CD4-positive, alpha-beta T cell (primary cell): ENCODE measurements at regions of chr12 and their contacts with region 1.

Region 1: DNA sequence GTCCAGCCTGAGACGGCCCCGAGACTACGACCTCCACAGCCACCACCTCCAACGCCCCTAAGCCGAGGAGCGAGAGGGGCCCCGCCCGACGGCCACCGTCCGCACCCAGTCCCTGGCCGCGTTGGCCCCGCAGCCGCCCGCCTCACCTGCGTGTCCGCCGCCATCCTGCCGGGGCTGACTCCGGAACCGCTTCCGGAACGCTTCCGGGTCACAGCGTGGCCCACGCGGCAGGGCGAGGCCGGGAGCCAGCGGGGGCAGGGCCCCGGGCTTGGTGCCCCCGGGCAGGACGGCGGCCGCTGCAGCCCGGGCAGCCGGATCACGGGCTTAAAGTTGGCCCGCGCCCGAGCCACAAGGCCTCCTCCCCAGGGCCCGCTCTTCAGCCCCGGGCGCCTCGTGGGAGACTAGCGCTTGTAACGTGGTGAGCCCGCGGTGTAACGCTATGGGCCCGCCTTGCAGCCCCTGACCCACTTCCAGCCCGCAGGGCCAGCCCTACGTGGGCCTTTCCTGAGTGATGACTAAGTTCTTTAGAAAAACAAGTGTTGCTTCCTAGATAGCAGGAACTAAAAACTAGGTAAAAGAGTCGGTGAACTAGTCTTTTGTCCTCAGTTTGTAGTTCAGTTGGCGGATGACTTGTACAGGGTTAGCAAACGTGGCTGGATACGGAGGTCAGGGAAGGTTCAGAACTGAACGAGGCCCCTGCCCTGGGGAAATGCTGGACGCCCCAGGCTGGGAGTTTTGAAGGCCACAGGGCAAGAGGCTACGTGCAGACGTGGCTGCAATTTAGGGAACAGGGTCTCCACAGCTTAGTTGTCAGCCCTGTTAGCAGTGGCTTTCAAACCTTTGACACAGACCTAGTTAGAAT is at the start of gene GCN1:
- DNase-seq: peak; percentile 75 to 92 (median 86)
- ATAC-seq: peak; percentile 88
- H3K4me3 ChIP-seq: peak within 1 kb of the TSS; percentile 64
- H3K4me3 Mint-ChIP-seq: peak within 1 kb of the TSS; percentile 95
- H3K27ac ChIP-seq: peak within 1 kb of the TSS; percentile 75 to 86
- H3K27ac Mint-ChIP-seq: peak within 1 kb of the TSS; percentile 98
- H3K4me1 ChIP-seq: peaks cover 49% of the 10 kb centered on the region
- H3K4me1 Mint-ChIP-seq: peaks cover 45% of the 10 kb centered on the region
- H3K27me3 ChIP-seq: no peaks in the 10 kb centered on the region
- H3K27me3 Mint-ChIP-seq: no peaks in the 10 kb centered on the region
- CTCF ChIP-seq: no peak
- total RNA-seq, gene GCN1: 121 to 128 TPM

Region 2: GRCh38 chr12:120012067-120012621 is 182.6 kb before region 1 on chr12:
- CTCF ChIA-PET with region 1: no interaction called
- POLR2A ChIA-PET with region 1: interaction called, 11 read pairs
- intact Hi-C with region 1: no loop called
- DNase-seq: peak; percentile 27 to 98 (median 62)
- ATAC-seq: peak; percentile 57
- H3K4me3 ChIP-seq: peak overlapping the region; percentile 21
- H3K4me3 Mint-ChIP-seq: peak overlapping the region; percentile 76
- H3K27ac ChIP-seq: peak overlapping the region; percentile 86 to 96
- H3K27ac Mint-ChIP-seq: peak overlapping the region; percentile 96
- H3K4me1 ChIP-seq: peaks cover 75% of the 10 kb centered on the region
- H3K4me1 Mint-ChIP-seq: peaks cover 81% of the 10 kb centered on the region
- H3K27me3 ChIP-seq: no peaks in the 10 kb centered on the region
- H3K27me3 Mint-ChIP-seq: no peaks in the 10 kb centered on the region
- CTCF ChIP-seq: no peak

Region 3: DNA sequence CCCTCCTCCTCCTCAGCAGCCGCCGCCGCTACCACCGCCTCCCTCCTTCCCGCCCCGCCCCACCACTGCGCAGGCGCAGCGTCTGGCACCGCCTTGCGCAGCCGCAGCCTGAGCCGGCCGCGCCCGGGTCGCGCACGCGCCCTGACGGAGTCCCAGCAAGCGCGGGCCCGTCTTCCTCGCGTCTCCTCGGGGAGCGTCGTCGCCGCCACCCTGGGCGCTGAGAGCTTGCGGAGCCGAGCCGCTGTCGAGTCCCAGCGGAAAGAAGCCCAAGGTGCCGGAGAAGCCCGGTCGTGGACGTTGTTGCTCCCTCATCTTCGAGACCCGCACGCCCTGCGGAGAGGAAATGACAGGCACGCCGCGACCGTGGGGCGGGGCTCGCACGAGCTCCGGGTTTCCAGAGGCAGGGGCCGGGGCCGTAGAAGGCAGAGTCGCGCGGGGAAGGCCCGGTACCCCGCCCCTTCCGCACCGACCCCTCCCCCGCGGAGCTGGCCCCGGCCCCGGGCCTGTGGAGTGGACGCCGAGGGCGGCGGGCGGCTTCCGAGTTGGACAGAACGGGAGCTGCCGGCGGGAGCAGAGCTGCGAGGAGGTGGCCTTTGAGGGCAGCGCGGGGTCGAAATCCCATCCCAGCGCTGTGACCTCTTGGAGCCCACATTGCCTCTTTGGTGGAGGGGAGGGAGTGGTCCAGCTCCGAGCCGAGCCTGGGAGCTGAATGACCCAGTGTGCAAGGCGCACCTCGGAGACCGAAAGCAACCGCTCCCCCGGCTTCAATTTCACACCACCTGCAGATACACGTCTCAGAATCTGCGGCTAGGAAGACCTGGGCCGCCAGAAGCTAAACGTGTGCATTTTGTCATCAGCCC is 77.7 kb before region 1 on chr12:
- CTCF ChIA-PET with region 1: no interaction called
- POLR2A ChIA-PET with region 1: no interaction called
- intact Hi-C with region 1: loop called in 1 of 2 experiments (anchors 5 kb)
- DNase-seq: peak; percentile 96 to 99 (median 98)
- ATAC-seq: peak; percentile 75
- H3K4me3 ChIP-seq: peak overlapping the region; percentile 86
- H3K4me3 Mint-ChIP-seq: peak overlapping the region; percentile 91
- H3K27ac ChIP-seq: peak overlapping the region; percentile 94 to 95
- H3K27ac Mint-ChIP-seq: peak overlapping the region; percentile 84
- H3K4me1 ChIP-seq: peaks cover 61% of the 10 kb centered on the region
- H3K4me1 Mint-ChIP-seq: peaks cover 76% of the 10 kb centered on the region
- H3K27me3 ChIP-seq: no peaks in the 10 kb centered on the region
- H3K27me3 Mint-ChIP-seq: no peaks in the 10 kb centered on the region
- CTCF ChIP-seq: no peak

Region 4: GRCh38 chr12:120228291-120229070 is 33.7 kb after region 1 on chr12:
- CTCF ChIA-PET with region 1: no interaction called
- POLR2A ChIA-PET with region 1: interaction called, 76 read pairs
- intact Hi-C with region 1: no loop called
- DNase-seq: peak; percentile 83 to 94 (median 88)
- ATAC-seq: peak; percentile 69
- H3K4me3 ChIP-seq: peak overlapping the region; percentile 28
- H3K4me3 Mint-ChIP-seq: peak overlapping the region; percentile 65
- H3K27ac ChIP-seq: peak overlapping the region in 1 of 2 donors; percentile 26
- H3K27ac Mint-ChIP-seq: peak overlapping the region; percentile 70
- H3K4me1 ChIP-seq: peaks cover 95% of the 10 kb centered on the region
- H3K4me1 Mint-ChIP-seq: peaks cover 91% of the 10 kb centered on the region
- H3K27me3 ChIP-seq: no peaks in the 10 kb centered on the region
- H3K27me3 Mint-ChIP-seq: no peaks in the 10 kb centered on the region
- CTCF ChIP-seq: peak; percentile 93

Region 5: GRCh38 chr12:120257041-120257821 is 62.5 kb after region 1 on chr12:
- CTCF ChIA-PET with region 1: no interaction called
- POLR2A ChIA-PET with region 1: interaction called, 80 read pairs
- intact Hi-C with region 1: no loop called
- DNase-seq: peak in 1 of 14 experiments; percentile 27
- ATAC-seq: no peak
- H3K4me3 ChIP-seq: no peak overlapping the region
- H3K4me3 Mint-ChIP-seq: peak overlapping the region; percentile 77
- H3K27ac ChIP-seq: peak overlapping the region; percentile 33 to 51
- H3K27ac Mint-ChIP-seq: peak overlapping the region; percentile 95
- H3K4me1 ChIP-seq: peaks cover 97% of the 10 kb centered on the region
- H3K4me1 Mint-ChIP-seq: peaks cover 89% of the 10 kb centered on the region
- H3K27me3 ChIP-seq: no peaks in the 10 kb centered on the region
- H3K27me3 Mint-ChIP-seq: no peaks in the 10 kb centered on the region
- CTCF ChIP-seq: no peak